CD4-positive, alpha-beta T cell (primary cell): ENCODE measurements at regions of chr1 and their contacts with region 1.

Region 1: DNA sequence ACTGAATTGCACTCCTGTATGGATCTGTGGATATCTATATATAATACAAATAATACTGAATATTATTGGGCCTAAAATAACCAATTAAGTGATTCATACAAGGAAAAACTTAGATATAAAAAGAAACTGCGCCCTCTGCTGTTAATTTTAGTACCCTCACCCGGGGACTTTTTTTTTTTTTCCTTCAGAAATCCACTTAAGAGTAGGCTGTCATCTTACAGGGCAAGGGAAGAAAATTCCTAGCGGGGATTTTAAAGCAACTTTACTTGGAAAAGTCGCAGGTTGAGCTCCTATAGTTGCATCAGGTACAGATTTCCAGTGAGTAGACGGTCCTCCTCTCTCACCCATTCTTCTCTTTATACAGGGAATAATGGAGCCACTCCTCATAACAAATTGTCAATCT is 1.3 kb downstream of the NTNG1 start:
- DNase-seq: peak in 3 of 14 experiments; percentile 18 to 33 (median 19)
- ATAC-seq: no peak
- H3K4me3 ChIP-seq: peak overlapping the region; percentile 43
- H3K4me3 Mint-ChIP-seq: peak overlapping the region; percentile 75
- H3K27ac ChIP-seq: no peak overlapping the region
- H3K27ac Mint-ChIP-seq: no peak overlapping the region
- H3K4me1 ChIP-seq: peaks cover 19% of the 10 kb centered on the region
- H3K4me1 Mint-ChIP-seq: peaks cover 24% of the 10 kb centered on the region
- H3K27me3 ChIP-seq: peaks cover 14 to 76% of the 10 kb centered on the region in 2 experiments
- H3K27me3 Mint-ChIP-seq: peaks cover 80% of the 10 kb centered on the region
- CTCF ChIP-seq: peak; percentile 72

Region 2: GRCh38 chr1:106897976-106898375 is 244.2 kb before region 1 on chr1:
- CTCF ChIA-PET with region 1: no interaction called
- POLR2A ChIA-PET with region 1: no interaction called
- intact Hi-C with region 1: no loop called
- DNase-seq: no peak
- ATAC-seq: no peak
- H3K4me3 ChIP-seq: no peak overlapping the region
- H3K4me3 Mint-ChIP-seq: no peak overlapping the region
- H3K27ac ChIP-seq: no peak overlapping the region
- H3K27ac Mint-ChIP-seq: no peak overlapping the region
- H3K4me1 ChIP-seq: no peaks in the 10 kb centered on the region
- H3K4me1 Mint-ChIP-seq: no peaks in the 10 kb centered on the region
- H3K27me3 ChIP-seq: no peaks in the 10 kb centered on the region
- H3K27me3 Mint-ChIP-seq: no peaks in the 10 kb centered on the region
- CTCF ChIP-seq: no peak

Region 3: GRCh38 chr1:107056426-107057196 is 85.5 kb before region 1 on chr1 and contains the start of gene PRMT6:
- CTCF ChIA-PET with region 1: no interaction called
- POLR2A ChIA-PET with region 1: no interaction called
- intact Hi-C with region 1: loop called in 1 of 2 experiments (anchors 2 kb)
- DNase-seq: peak; percentile 62 to 89 (median 77)
- ATAC-seq: peak; percentile 96
- H3K4me3 ChIP-seq: peak within 1 kb of the TSS; percentile 96
- H3K4me3 Mint-ChIP-seq: peak within 1 kb of the TSS; percentile 98
- H3K27ac ChIP-seq: peak within 1 kb of the TSS; percentile 65 to 71
- H3K27ac Mint-ChIP-seq: peak within 1 kb of the TSS; percentile 96
- H3K4me1 ChIP-seq: peaks cover 17% of the 10 kb centered on the region
- H3K4me1 Mint-ChIP-seq: peaks cover 27% of the 10 kb centered on the region
- H3K27me3 ChIP-seq: no peaks in the 10 kb centered on the region
- H3K27me3 Mint-ChIP-seq: no peaks in the 10 kb centered on the region
- CTCF ChIP-seq: no peak
- total RNA-seq, gene PRMT6: 6.1 to 7.9 TPM

Region 4: GRCh38 chr1:107648071-107648470 is 505.9 kb after region 1 on chr1:
- CTCF ChIA-PET with region 1: no interaction called
- POLR2A ChIA-PET with region 1: no interaction called
- intact Hi-C with region 1: no loop called
- DNase-seq: no peak
- ATAC-seq: no peak
- H3K4me3 ChIP-seq: no peak overlapping the region
- H3K4me3 Mint-ChIP-seq: no peak overlapping the region
- H3K27ac ChIP-seq: no peak overlapping the region
- H3K27ac Mint-ChIP-seq: no peak overlapping the region
- H3K4me1 ChIP-seq: no peaks in the 10 kb centered on the region
- H3K4me1 Mint-ChIP-seq: no peaks in the 10 kb centered on the region
- H3K27me3 ChIP-seq: no peaks in the 10 kb centered on the region
- H3K27me3 Mint-ChIP-seq: no peaks in the 10 kb centered on the region
- CTCF ChIP-seq: no peak